PC-3 (cell line): ENCODE measurements at regions of chr13 and their contacts with region 1.

Region 1: GRCh38 chr13:109156181-109156935 is 526.9 kb downstream of the MYO16 start:
- DNase-seq: peak; percentile 88
- ATAC-seq: peak; percentile 78
- H3K4me3 ChIP-seq: peak overlapping the region; percentile 40
- H3K27ac ChIP-seq: peak overlapping the region; percentile 95
- H3K4me1 ChIP-seq: peaks cover 79% of the 10 kb centered on the region
- H3K27me3 ChIP-seq: no peaks in the 10 kb centered on the region
- CTCF ChIP-seq: no peak

Region 2: GRCh38 chr13:109166804-109167203 is 10.4 kb after region 1 on chr13:
- CTCF ChIA-PET with region 1: no interaction called
- POLR2A ChIA-PET with region 1: no interaction called
- intact Hi-C with region 1: no loop called
- DNase-seq: no peak
- ATAC-seq: no peak
- H3K4me3 ChIP-seq: no peak overlapping the region
- H3K27ac ChIP-seq: no peak overlapping the region
- H3K4me1 ChIP-seq: peaks cover 10% of the 10 kb centered on the region
- H3K27me3 ChIP-seq: no peaks in the 10 kb centered on the region
- CTCF ChIP-seq: no peak

Region 3: DNA sequence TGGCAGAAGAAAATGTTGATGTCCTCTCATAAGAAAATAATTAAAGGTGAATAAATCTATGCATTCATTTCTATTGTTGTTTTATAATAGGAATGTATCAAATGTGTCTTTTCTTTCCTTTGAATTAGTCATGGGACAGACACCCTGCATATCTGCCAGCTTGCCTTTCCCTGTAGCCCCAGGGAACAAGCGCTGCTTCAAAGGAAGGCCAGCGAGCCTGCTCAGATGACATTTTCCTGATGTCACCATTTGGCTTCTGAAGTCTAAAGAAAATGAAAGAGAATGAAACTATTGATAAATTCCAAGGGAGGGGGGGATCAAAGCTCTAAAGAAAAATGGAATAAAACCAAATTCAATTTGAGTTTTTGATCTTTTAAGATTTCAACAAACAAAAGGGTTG is 55.3 kb after region 1 on chr13:
- CTCF ChIA-PET with region 1: no interaction called
- POLR2A ChIA-PET with region 1: no interaction called
- intact Hi-C with region 1: loop called (anchors 2 kb)
- DNase-seq: peak; percentile 85
- ATAC-seq: peak; percentile 83
- H3K4me3 ChIP-seq: no peak overlapping the region
- H3K27ac ChIP-seq: no peak overlapping the region
- H3K4me1 ChIP-seq: peaks cover 36% of the 10 kb centered on the region
- H3K27me3 ChIP-seq: no peaks in the 10 kb centered on the region
- CTCF ChIP-seq: no peak

Region 4: DNA sequence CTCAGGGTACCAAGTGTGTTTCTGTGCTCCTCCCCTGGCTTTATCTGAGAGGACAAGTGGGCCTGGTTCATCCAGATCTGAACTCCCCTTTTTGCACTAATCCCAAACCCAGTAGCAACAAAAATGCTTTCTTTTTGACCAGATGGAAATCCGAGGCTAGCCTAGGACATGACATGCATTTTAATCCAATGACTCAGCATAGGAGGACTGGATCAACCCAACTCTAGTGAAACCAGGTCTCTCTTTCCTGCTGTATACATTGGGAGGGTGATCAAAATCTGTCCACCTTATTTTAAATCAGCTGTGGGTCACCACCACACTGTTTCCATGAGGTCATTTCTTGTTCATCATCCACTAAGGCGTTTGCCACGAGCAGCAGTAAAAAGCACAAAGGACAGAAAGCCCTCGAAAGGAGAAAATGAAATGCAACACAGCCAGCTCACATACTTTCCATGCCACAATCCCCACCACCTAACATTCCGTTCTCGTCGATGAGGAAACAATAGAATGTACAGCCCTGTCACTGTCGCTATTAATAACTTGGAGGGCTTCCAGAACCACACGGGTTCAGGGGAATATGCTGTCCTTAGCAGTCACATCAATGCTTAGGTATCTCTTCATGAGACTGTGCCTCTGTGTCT is 87.1 kb after region 1 on chr13:
- CTCF ChIA-PET with region 1: no interaction called
- POLR2A ChIA-PET with region 1: interaction called, 25 read pairs
- intact Hi-C with region 1: no loop called
- DNase-seq: peak; percentile 88
- ATAC-seq: peak; percentile 99
- H3K4me3 ChIP-seq: peak overlapping the region; percentile 26
- H3K27ac ChIP-seq: peak overlapping the region; percentile 77
- H3K4me1 ChIP-seq: peaks cover 23% of the 10 kb centered on the region
- H3K27me3 ChIP-seq: no peaks in the 10 kb centered on the region
- CTCF ChIP-seq: no peak

Region 5: GRCh38 chr13:109249780-109250528 is 93.6 kb after region 1 on chr13:
- CTCF ChIA-PET with region 1: no interaction called
- POLR2A ChIA-PET with region 1: interaction called, 12 read pairs
- intact Hi-C with region 1: no loop called
- DNase-seq: peak; percentile 63
- ATAC-seq: peak; percentile 37; the same call in 1 of the 2 replicates
- H3K4me3 ChIP-seq: no peak overlapping the region
- H3K27ac ChIP-seq: peak overlapping the region; percentile 22
- H3K4me1 ChIP-seq: peaks cover 7% of the 10 kb centered on the region; the same call in 1 of the 2 replicates
- H3K27me3 ChIP-seq: no peaks in the 10 kb centered on the region
- CTCF ChIP-seq: no peak